Right ventricle myocardium inferior (tissue), 1 donor: ENCODE measurements at regions of chr12 and their contacts with region 1.

Region 1: GRCh38 chr12:96211988-96212387 is 17.8 kb downstream of the ELK3 start:
- DNase-seq: no peak
- ATAC-seq: no peak

Region 2: GRCh38 chr12:95858479-95859343 is 353.3 kb before region 1 on chr12 and contains the start of gene SNRPF:
- intact Hi-C with region 1: no loop called
- DNase-seq: peak; percentile 95
- ATAC-seq: peak; percentile 99
- total RNA-seq, gene SNRPF: 12.1 TPM

Region 3: DNA sequence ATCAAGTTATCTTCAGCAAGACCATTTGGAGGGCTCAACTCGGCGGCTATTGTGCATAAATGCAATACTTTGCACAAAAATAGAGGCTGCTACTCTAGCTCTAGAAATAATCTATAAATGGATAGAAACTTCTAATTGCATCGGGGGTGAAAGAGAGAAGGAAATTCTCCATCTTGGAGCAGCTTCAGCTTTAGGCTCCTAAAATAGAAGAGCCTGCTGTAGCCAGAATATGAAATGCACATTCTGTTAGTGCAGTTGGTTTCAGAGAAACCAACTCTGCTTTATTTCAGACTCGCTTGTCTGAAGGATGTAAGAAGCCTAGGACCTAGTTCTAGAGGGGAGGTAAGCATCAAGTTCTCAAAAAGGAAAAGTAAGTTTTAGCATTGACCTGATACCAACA is 315.1 kb before region 1 on chr12:
- intact Hi-C with region 1: no loop called
- DNase-seq: no peak
- ATAC-seq: no peak

Region 4: GRCh38 chr12:96140174-96140573 is 71.8 kb before region 1 on chr12:
- intact Hi-C with region 1: no loop called
- DNase-seq: no peak
- ATAC-seq: no peak

Region 5: GRCh38 chr12:96194971-96195844 is 16.8 kb before region 1 on chr12:
- intact Hi-C with region 1: loop called (anchors 2 kb)
- DNase-seq: peak; percentile 71
- ATAC-seq: peak; percentile 53

Region 6: DNA sequence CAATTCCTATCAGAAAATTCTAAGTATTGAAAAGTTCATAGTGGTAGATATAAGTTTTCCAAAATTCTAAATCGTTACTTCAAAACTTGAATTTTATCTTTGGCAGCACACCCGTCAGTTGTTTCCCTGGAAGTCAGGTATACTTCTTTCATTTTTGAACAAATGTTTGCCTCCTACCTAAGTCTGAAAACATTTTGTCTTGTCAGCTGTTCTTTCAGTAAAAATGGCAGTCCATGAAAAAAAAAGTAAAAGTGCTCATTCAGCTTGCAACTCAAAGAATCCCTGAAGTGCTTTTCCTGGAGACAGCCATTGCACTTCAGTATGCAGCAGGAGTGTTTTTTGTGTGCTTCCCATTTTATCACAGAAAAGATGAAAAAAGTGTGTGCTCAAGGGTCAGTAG is 564.9 kb after region 1 on chr12:
- intact Hi-C with region 1: no loop called
- DNase-seq: no peak
- ATAC-seq: no peak